ENCODE measurements at regions of chr2 and their contacts with region 1.

Region 1: GRCh38 chr2:160109936-160110673 is 47.7 kb upstream of the PLA2R1 start:
- DNase-seq: peak; percentile 74
- H3K4me3 Mint-ChIP-seq: no peak overlapping the region
- H3K27ac Mint-ChIP-seq: no peak overlapping the region
- H3K4me1 Mint-ChIP-seq: no peaks in the 10 kb centered on the region
- H3K27me3 Mint-ChIP-seq: peaks cover 10% of the 10 kb centered on the region

Region 2: GRCh38 chr2:160169471-160169870 is 59.4 kb after region 1 on chr2:
- CTCF ChIA-PET with region 1: no interaction called
- intact Hi-C with region 1: no loop called
- DNase-seq: no peak
- H3K4me3 Mint-ChIP-seq: no peak overlapping the region
- H3K27ac Mint-ChIP-seq: no peak overlapping the region
- H3K4me1 Mint-ChIP-seq: no peaks in the 10 kb centered on the region
- H3K27me3 Mint-ChIP-seq: no peaks in the 10 kb centered on the region

Region 3: DNA sequence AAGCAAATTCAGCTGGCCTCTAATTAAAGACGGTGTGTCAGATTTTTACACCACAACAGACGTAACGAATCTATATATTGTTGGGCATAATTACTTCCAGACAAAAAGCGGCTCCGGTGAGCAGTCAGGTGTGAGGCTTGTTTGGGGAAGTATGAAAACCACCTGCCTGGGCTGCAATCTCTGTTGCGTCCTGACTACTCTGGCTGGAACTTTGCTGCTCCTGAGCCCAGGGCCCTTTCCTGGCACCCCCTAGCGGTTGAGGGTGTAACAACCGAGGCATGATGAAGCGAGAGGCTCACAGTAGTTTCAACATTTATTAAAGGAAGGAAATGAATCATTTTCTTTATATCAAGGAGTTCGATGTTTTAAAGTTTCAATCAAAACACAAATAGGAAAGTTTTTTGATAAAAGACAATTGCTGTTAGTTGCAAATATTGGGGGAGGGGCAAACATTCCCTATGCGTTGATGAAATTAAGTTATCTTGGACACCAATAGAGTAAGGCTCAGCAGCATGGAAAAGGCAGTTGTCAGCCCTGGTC is 100.6 kb after region 1 on chr2:
- CTCF ChIA-PET with region 1: interaction called, 19 read pairs
- intact Hi-C with region 1: loop called (anchors 1 kb)
- DNase-seq: peak; percentile 90
- H3K4me3 Mint-ChIP-seq: no peak overlapping the region
- H3K27ac Mint-ChIP-seq: no peak overlapping the region
- H3K4me1 Mint-ChIP-seq: peaks cover 29% of the 10 kb centered on the region
- H3K27me3 Mint-ChIP-seq: peaks cover 7% of the 10 kb centered on the region

Region 4: DNA sequence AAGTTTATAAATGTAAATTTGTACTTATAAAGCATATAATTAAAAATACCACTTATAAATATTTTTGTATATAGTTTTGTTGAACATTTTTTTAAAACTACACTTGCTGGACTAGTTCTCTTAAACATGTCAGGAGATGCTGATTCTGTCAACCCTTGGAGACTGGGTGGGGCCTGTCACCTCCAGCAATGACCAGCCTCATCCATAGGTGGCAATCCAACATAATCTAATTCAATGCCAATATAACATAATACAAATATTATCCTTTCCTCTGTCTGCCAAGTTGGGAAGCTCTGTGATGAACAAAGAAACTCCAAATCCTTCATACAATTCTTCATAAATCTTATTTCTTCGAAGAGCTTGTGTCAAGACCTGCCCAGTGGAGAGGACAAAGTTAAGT is 243.1 kb after region 1 on chr2:
- CTCF ChIA-PET with region 1: no interaction called
- intact Hi-C with region 1: loop called (anchors 10 kb)
- DNase-seq: peak; percentile 59
- H3K4me3 Mint-ChIP-seq: no peak overlapping the region
- H3K27ac Mint-ChIP-seq: no peak overlapping the region
- H3K4me1 Mint-ChIP-seq: peaks cover 66% of the 10 kb centered on the region
- H3K27me3 Mint-ChIP-seq: no peaks in the 10 kb centered on the region

Region 5: DNA sequence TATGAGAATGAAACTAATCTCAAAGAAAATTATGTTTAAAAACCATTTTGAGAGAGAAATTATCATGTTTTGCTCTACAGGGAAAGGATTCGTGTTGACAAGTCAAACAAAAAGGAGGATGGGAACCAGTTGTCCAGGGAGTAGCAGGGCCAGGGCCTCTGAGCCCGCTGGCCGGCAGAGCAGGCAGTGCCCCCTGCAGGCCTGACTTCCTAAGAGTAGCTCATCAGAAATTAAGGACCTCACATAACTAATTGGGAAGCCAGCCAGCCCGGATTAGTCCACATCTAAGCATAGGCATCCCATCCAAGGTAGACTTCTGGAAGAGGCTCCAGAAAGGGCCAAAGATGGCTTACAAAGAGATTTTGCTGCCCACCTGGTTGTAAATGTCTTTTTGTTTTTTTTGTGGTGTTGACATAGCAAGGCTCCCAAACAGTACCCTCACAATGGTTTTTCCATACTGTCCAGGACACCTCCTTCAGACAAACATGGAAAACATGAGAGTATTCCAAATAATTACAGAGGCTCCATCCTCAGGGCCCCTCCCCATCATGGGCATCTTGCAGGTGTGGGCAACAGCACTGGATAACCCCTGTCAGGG is 808.9 kb after region 1 on chr2:
- CTCF ChIA-PET with region 1: no interaction called
- intact Hi-C with region 1: loop called (anchors 2 kb)
- DNase-seq: peak; percentile 58
- H3K4me3 Mint-ChIP-seq: no peak overlapping the region
- H3K27ac Mint-ChIP-seq: no peak overlapping the region
- H3K4me1 Mint-ChIP-seq: no peaks in the 10 kb centered on the region
- H3K27me3 Mint-ChIP-seq: no peaks in the 10 kb centered on the region

Region 6: DNA sequence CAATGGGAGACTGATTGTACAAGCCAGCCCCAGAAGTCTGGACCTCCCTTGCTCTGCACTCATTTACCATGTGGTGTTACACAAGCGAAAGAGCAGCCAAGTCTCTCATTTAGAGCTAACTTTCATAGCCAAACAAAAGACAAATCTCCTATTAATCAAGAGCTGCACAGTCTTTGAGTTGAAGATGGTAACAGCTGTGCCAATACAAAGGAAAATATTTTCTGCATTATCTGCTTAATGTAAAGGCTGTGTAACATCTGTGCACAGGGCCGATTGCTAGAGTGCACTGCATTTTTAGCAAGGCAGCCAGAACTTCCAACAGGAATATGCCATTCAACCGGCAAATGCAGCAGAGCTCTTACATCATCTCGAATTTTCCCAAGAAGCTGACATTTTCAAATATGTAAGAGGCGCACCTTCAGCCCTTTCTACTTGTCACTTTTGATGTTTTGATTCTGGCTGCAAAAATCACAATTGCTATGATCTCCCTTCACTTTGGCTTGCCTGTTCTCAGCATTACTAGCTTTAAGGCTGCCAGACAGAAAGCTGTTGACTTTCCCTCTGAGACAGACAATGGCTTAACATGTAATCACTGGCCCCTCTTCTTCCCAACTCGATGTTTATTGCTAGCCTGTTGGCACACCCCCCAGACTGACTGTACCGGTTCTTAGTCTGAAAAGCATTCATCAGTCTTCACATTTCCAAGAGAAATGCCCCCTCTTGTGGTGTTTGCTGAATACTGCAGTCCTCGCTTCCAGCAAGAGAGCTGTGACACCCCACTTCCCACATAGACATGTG is 953.3 kb after region 1 on chr2:
- CTCF ChIA-PET with region 1: interaction called, 12 read pairs
- intact Hi-C with region 1: loop called (anchors 2 kb)
- DNase-seq: peak; percentile 81
- H3K4me3 Mint-ChIP-seq: no peak overlapping the region
- H3K27ac Mint-ChIP-seq: no peak overlapping the region
- H3K4me1 Mint-ChIP-seq: peaks cover 9% of the 10 kb centered on the region
- H3K27me3 Mint-ChIP-seq: peaks cover 5% of the 10 kb centered on the region

Measured in activated naive CD4-positive, alpha-beta T cell treated with anti-CD3 and anti-CD28 coated beads for 36 hours (primary cell).